Dendritic cell treated with granulocyte-macrophage colony-stimulating factor and Interleukin-4, amounts not matched to agents 40 ng/mL and 50 ng/mL, for 4 days (primary cell): ENCODE measurements at regions of chr10 and their contacts with region 1.

Region 1: DNA sequence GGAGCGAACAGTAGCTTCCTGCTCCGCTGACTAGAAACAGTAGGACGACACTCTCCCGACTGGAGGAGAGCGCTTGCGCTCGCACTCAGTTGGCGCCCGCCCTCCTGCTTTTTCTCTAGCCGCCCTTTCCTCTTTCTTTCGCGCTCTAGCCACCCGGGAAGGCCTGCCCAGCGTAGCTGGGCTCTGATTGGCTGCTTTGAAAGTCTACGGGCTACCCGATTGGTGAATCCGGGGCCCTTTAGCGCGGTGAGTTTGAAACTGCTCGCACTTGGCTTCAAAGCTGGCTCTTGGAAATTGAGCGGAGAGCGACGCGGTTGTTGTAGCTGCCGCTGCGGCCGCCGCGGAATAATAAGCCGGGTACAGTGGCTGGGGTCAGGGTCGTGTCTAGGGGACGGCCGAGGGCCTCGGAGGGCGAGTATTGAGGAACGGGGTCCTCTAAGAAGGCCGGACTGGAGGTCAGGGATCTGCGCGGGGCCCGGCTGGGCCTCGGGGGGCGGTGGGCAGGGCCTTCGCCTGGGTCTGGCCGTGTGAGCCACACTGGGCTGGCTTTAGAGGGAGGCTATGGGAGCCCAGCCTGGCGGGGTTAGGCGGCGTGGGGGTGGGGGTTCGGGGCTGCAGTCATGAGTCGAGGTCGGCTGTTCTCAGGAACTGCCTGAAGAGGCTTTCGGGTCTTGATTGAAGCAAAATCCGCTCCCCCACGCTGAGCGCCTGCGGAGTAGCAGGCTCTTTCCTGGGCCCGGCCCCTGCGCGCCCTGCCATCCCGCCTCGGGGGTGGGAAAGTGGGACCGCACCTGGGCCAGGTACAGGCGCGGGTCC is at the start of gene CDK1:
- H3K4me3 Mint-ChIP-seq: peak within 1 kb of the TSS; percentile 98
- H3K27ac Mint-ChIP-seq: peak within 1 kb of the TSS; percentile 79
- H3K4me1 Mint-ChIP-seq: peaks cover 9% of the 10 kb centered on the region
- H3K27me3 Mint-ChIP-seq: peaks cover 1% of the 10 kb centered on the region

Region 2: DNA sequence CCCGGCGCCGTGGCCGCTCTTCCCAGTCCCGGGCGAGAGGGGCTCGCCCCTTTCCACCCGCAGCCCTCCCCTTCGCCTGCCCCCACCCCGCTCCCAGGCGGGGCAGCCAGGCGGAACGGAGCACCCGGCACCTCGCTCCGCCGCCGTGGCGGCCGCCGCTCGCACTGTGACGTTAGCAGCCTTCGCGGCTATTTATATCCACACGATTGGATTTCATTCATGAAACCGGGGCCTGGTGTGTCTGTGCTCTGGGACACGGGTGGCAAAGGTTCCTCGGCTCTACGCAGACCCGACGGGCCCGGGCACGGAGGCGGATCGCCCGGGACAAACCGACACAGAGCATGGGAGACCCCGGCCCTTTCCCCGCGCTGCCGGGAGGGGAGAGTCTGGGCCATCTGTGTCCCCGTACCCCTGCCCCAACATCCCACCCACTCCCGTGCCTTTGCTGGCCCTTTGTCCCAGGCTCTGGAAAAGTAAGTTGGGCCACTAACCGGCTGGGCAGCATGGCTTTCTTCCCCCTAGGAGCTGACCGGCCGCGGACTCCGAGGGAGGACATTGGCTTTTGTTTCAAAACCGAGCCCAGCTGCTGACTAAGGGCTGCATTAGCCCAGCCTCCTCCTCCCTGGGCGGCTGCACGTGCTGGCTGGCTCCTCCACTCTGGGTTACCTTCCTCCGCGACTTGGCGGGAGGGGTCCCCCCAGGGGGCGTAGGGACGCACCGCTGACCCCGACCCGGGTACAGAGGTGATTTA is 165.9 kb after region 1 on chr10 and contains the start of gene RHOBTB1:
- intact Hi-C with region 1: loop called (anchors 5 kb)
- H3K4me3 Mint-ChIP-seq: peak within 1 kb of the TSS; percentile 88
- H3K27ac Mint-ChIP-seq: peak within 1 kb of the TSS; percentile 95
- H3K4me1 Mint-ChIP-seq: peaks cover 21% of the 10 kb centered on the region
- H3K27me3 Mint-ChIP-seq: peaks cover 16% of the 10 kb centered on the region